IMR-90 (cell line): ENCODE measurements at regions of chr1 and their contacts with region 1.

Region 1: DNA sequence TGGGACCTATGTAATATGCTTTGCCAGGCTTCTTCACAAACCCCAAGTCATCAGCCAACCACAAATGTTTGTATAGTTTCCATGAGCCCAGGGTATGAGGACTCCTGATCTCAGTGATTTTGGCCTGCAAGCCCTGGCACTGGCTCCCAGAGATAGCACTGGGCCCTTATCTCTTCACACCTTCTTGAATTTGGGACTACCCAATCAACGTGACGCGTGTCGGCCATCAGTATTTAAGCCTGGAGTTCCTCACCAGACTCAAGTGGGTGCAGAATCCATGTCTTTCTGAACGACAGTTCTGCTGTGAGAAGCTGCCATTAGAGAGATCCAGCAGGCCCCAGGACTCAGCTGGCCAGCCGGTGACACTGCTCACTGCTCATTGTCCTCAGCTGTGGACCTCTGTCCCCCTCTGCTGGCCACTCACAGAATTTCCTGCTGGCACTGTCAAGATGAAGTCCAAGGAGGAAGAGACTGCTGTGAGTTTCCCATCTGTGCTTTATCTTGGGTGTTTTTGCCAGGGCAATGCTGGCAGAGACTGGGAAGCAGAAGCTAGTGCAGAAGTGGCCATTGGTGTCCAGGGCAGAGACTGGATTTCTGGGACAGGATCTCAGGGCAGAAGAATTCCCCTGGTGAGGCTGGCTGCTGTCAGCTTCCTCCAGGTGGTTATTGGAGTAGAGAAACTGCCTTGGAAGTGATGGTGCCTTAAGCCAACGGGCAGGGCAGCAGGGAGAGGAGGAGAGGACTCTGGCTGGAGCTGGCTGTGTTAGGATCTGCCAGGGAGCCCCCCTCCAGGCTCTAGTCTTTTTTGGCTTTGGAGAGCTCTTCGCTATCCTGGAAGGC is 28.4 kb downstream of the TMCC2 start:
- DNase-seq: peak; percentile 80
- ATAC-seq: peak; percentile 98
- H3K4me3 ChIP-seq: no peak overlapping the region
- H3K27ac ChIP-seq: no peak overlapping the region
- H3K4me1 ChIP-seq: peaks cover 10% of the 10 kb centered on the region
- H3K27me3 ChIP-seq: no peaks in the 10 kb centered on the region
- CTCF ChIP-seq: peak; percentile 98
- POLR2A ChIP-seq: no peak
- RAD21 ChIP-seq: peak; percentile 99

Region 2: DNA sequence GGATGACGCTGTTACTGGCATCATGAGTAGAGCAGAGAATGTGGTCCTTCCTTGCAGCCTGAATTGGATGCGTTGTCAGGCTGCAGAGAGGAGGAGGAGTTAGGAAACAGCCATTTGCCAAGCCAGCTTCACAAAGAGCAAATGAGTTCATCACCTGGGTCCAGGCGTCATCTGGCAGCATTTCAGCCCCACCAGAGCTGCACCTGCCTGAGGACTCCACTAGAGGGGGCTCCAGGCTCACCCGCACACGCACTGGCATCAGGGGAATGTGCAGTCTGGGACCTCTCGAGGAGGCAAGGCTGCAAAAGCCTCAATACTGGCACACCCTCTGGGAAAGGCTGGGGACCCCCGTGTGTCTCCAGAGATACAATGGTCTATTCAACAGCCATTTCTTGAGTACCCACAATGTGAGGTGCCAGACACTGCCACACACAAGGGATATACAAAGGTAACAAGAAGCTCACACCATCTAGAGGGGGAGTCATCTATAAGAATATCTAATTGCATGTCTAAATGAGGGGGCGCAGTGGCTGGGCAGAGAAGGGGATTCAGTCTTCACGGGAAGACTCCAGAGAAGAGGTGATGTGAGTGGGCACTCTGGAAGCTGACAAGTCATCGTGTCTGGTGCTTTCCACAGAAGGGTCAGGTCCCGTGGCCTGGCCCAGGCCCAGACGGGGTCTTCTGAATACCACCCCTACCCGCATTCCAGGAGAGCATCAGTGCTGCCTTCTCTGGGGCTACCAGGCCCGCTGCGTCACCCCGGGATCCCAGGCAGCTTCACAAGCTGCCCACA is 266.7 kb before region 1 on chr1:
- CTCF ChIA-PET with region 1: interaction called, 19 read pairs
- POLR2A ChIA-PET with region 1: no interaction called
- dilution Hi-C with region 1: no loop called
- in situ Hi-C with region 1: no loop called
- intact Hi-C with region 1: loop called (anchors 1 kb)
- DNase-seq: peak; percentile 67
- ATAC-seq: peak; percentile 98
- H3K4me3 ChIP-seq: no peak overlapping the region
- H3K27ac ChIP-seq: no peak overlapping the region
- H3K4me1 ChIP-seq: no peaks in the 10 kb centered on the region
- H3K27me3 ChIP-seq: peaks cover 47% of the 10 kb centered on the region
- CTCF ChIP-seq: peak; percentile 97
- POLR2A ChIP-seq: no peak
- RAD21 ChIP-seq: peak; percentile 97

Region 3: GRCh38 chr1:205121660-205122488 is 134.3 kb before region 1 on chr1 and contains the start of gene RBBP5:
- CTCF ChIA-PET with region 1: interaction called, 4 read pairs
- POLR2A ChIA-PET with region 1: no interaction called
- dilution Hi-C with region 1: no loop called
- in situ Hi-C with region 1: no loop called
- intact Hi-C with region 1: loop called (anchors 2 kb)
- DNase-seq: peak; percentile 98
- ATAC-seq: peak; percentile 99
- H3K4me3 ChIP-seq: peak within 1 kb of the TSS; percentile 89
- H3K27ac ChIP-seq: peak within 1 kb of the TSS; percentile 88
- H3K4me1 ChIP-seq: peaks cover 2% of the 10 kb centered on the region; the same call in 1 of the 2 replicates
- H3K27me3 ChIP-seq: no peaks in the 10 kb centered on the region
- CTCF ChIP-seq: peak; percentile 89
- POLR2A ChIP-seq: peak; percentile 95
- RAD21 ChIP-seq: peak; percentile 61
- total RNA-seq, gene RBBP5: 33.9 and 37.5 TPM in 2 replicates

Region 4: DNA sequence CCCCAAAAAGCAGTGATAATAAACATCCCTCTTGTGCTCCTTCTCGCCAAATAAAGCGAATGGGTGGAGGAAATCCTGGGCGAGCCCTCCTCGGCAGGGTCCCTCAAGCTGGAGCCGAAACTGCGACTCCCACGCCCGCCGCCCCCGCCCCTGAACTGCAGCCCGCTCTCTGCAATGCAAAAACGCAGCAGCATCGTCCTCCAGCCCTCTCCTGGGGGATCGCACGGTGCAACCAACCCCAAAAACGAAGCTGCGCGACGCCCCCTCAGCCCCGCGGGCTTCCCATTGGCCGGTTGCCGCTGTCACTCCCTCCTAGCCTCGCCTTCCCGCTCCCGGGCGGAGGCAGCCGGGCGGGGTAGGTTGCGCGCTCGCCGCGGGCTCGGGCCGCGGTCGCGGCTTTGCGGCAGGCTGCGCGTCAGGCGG is 28.6 kb before region 1 on chr1 and contains the start of gene TMCC2:
- CTCF ChIA-PET with region 1: interaction called, 29 read pairs
- POLR2A ChIA-PET with region 1: no interaction called
- dilution Hi-C with region 1: no loop called
- in situ Hi-C with region 1: no loop called
- intact Hi-C with region 1: loop called (anchors 2 kb)
- DNase-seq: peak; percentile 84
- ATAC-seq: peak; percentile 98
- H3K4me3 ChIP-seq: peak within 1 kb of the TSS; percentile 90
- H3K27ac ChIP-seq: no peak within 1 kb of the TSS; the same call in 1 of the 2 replicates
- H3K4me1 ChIP-seq: peaks cover 14% of the 10 kb centered on the region
- H3K27me3 ChIP-seq: no peaks in the 10 kb centered on the region
- CTCF ChIP-seq: no peak
- POLR2A ChIP-seq: no peak
- RAD21 ChIP-seq: no peak
- total RNA-seq, gene TMCC2: 2.0 and 2.2 TPM in 2 replicates

Region 5: GRCh38 chr1:205321164-205321958 is 65.2 kb after region 1 on chr1 and contains the start of gene NUAK2:
- CTCF ChIA-PET with region 1: interaction called, 12 read pairs
- POLR2A ChIA-PET with region 1: no interaction called
- dilution Hi-C with region 1: no loop called
- in situ Hi-C with region 1: no loop called
- intact Hi-C with region 1: no loop called
- DNase-seq: peak; percentile 90
- ATAC-seq: peak; percentile 92
- H3K4me3 ChIP-seq: peak within 1 kb of the TSS; percentile 94
- H3K27ac ChIP-seq: peak within 1 kb of the TSS; percentile 87
- H3K4me1 ChIP-seq: peaks cover 35% of the 10 kb centered on the region
- H3K27me3 ChIP-seq: no peaks in the 10 kb centered on the region
- CTCF ChIP-seq: peak; percentile 37
- POLR2A ChIP-seq: peak; percentile 94
- RAD21 ChIP-seq: peak; percentile 35
- total RNA-seq, gene NUAK2: 7.2 and 8.1 TPM in 2 replicates